Activated CD8-positive, alpha-beta T cell treated with anti-CD3 and anti-CD28 coated beads for 36 hours (primary cell): ENCODE measurements at regions of chr5 and their contacts with region 1.

Region 1: DNA sequence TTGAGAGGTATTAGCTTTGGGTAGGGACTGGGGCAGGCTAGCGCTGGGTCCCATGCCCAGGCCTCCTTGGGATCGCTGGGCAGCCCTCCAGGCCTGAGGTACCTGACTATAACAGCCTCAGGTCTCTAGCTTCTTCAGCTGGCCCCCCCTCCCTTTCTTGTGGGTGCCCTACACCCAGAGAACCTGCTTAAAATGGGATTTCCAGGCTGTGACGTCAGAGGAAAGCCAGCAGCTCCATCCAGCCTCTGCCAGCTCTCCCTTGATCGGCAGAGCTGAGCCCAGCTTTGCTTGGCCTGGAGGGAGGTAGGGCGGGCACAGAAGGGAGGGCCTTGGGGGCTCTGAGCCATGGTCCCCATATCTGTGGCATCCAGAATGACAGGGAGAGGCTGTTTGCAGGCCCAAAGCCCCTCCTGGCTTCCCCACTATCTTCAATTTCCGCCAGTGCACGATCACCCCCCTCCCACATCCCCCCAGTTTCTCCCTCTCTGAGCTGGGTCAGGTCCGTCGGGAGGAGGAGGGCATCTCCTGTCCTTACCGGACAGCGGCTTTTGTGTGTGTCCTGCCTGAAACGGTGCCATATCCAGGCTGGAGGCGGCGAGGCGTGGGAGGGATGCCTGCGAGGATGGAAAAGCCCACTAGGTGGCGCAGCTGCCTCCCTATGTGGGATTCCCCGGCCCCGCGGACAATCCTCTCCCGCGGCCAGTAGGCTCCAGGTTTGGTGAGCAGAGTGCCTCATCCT is 10.8 kb downstream of the REEP2 start:
- DNase-seq: peak; percentile 92
- ATAC-seq: peak; percentile 97
- H3K4me3 Mint-ChIP-seq: peak overlapping the region; percentile 48
- H3K27ac Mint-ChIP-seq: no peak overlapping the region
- H3K4me1 Mint-ChIP-seq: peaks cover 5% of the 10 kb centered on the region
- H3K27me3 Mint-ChIP-seq: no peaks in the 10 kb centered on the region
- CTCF ChIP-seq: peak; percentile 89

Region 2: DNA sequence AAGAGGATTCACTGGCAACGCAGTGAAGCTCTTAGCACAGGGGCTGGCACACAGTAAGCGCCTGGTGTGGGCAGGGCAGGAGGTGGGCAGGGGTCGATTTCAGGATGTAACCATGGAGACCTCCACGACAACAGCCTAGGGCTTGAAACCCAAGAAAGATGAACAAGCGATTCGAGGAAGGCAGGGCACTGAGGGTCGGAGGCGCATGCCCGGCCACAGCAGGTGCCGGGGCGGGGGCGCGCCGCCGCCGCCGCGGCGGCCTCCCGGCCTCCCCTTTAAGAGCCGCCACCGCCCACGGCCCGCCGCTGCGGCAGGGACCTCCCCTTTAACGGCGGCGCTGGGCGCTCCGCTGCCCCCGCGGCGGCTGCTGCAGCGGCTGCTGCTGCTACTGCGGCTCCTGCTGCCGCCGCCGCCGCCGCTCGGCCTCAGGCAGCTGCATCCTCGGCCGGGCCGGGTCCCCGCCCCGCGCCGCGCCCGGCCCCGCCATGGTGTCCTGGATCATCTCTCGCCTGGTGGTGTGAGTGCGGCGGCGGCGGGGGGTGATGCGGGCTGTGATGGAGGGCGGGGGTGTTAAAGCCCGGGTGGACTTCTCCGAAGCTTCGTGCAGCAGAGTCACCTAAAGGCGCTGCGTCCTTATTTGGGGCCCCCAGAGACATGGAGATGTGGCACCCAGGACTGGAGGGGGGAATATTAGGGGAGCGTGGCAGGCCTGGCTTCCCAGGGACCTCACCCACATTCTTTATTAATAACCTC is 10.8 kb before region 1 on chr5 and contains the start of gene REEP2:
- CTCF ChIA-PET with region 1: interaction called, 38 read pairs
- POLR2A ChIA-PET with region 1: interaction called, 12 read pairs
- intact Hi-C with region 1: no loop called
- DNase-seq: peak; percentile 81
- ATAC-seq: peak; percentile 92
- H3K4me3 Mint-ChIP-seq: peak within 1 kb of the TSS; percentile 73
- H3K27ac Mint-ChIP-seq: no peak within 1 kb of the TSS
- H3K4me1 Mint-ChIP-seq: peaks cover 12% of the 10 kb centered on the region
- H3K27me3 Mint-ChIP-seq: no peaks in the 10 kb centered on the region
- CTCF ChIP-seq: no peak
- total RNA-seq, gene REEP2: 2.9 to 3.1 TPM

Region 3: GRCh38 chr5:138464008-138464387 is 14.3 kb after region 1 on chr5:
- CTCF ChIA-PET with region 1: interaction called, 51 read pairs
- POLR2A ChIA-PET with region 1: interaction called, 6 read pairs
- intact Hi-C with region 1: no loop called
- DNase-seq: peak; percentile 94
- ATAC-seq: peak; percentile 57
- H3K4me3 Mint-ChIP-seq: peak overlapping the region; percentile 82
- H3K27ac Mint-ChIP-seq: peak overlapping the region; percentile 97
- H3K4me1 Mint-ChIP-seq: peaks cover 53% of the 10 kb centered on the region
- H3K27me3 Mint-ChIP-seq: no peaks in the 10 kb centered on the region
- CTCF ChIP-seq: peak; percentile 94

Region 4: GRCh38 chr5:138491669-138492559 is 42.2 kb after region 1 on chr5:
- CTCF ChIA-PET with region 1: interaction called, 10 read pairs
- POLR2A ChIA-PET with region 1: no interaction called
- intact Hi-C with region 1: no loop called
- DNase-seq: peak; percentile 85
- ATAC-seq: peak; percentile 99
- H3K4me3 Mint-ChIP-seq: peak overlapping the region; percentile 78
- H3K27ac Mint-ChIP-seq: no peak overlapping the region
- H3K4me1 Mint-ChIP-seq: peaks cover 16% of the 10 kb centered on the region
- H3K27me3 Mint-ChIP-seq: peaks cover 22% of the 10 kb centered on the region
- CTCF ChIP-seq: no peak

Region 5: GRCh38 chr5:138503487-138504270 is 54.0 kb after region 1 on chr5:
- CTCF ChIA-PET with region 1: interaction called, 85 read pairs
- POLR2A ChIA-PET with region 1: interaction called, 3 read pairs
- intact Hi-C with region 1: no loop called
- DNase-seq: peak; percentile 32
- ATAC-seq: peak; percentile 81
- H3K4me3 Mint-ChIP-seq: no peak overlapping the region
- H3K27ac Mint-ChIP-seq: no peak overlapping the region
- H3K4me1 Mint-ChIP-seq: peaks cover 2% of the 10 kb centered on the region
- H3K27me3 Mint-ChIP-seq: no peaks in the 10 kb centered on the region
- CTCF ChIP-seq: peak; percentile 82

Region 6: DNA sequence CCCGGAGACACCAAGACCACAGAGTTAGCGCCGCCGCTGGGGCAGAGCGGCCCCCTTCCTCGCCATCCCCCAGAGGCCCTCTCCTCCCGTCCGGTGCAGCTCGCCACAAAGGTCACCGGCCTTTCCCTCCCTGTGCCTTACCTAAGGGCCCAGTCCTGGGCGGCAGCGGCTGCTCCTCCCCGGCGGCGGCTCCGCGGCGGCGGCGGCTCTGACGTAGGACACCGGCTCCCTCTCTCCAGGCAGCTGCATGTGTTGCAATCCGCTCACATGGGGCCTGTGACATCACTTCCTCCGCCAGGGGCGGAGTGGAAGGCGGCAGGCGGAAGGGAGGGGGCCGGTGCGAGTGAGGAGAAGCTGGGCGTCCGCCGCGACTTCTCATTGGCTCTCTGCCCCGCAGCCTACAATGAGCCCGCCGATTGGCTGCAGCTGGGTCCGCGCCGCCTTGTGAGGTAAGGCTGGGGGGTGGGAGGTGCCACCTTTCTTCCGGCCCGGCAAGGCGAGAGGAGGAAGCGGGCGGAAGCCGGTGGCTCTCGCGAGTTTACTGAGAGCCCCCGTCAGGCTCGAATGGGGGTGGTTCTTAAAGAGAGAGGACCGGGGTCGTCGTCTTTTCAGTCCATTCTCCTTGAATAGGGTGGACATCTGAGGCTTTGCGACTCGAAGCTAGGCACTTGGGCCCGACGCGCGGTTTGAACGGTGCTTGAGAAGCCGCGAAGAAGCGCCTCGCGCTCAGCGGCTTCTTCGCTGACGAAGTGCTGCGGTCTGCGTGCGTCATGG is 93.5 kb after region 1 on chr5 and contains the start of gene ETF1:
- CTCF ChIA-PET with region 1: interaction called, 11 read pairs
- POLR2A ChIA-PET with region 1: interaction called, 9 read pairs
- intact Hi-C with region 1: no loop called
- DNase-seq: peak; percentile 100
- ATAC-seq: peak; percentile 94
- H3K4me3 Mint-ChIP-seq: peak within 1 kb of the TSS; percentile 99
- H3K27ac Mint-ChIP-seq: peak within 1 kb of the TSS; percentile 100
- H3K4me1 Mint-ChIP-seq: peaks cover 67% of the 10 kb centered on the region
- H3K27me3 Mint-ChIP-seq: no peaks in the 10 kb centered on the region
- CTCF ChIP-seq: no peak
- total RNA-seq, gene ETF1: 154 to 161 TPM